ENCODE measurements at regions of chr19 and their contacts with region 1.

Region 1: GRCh38 chr19:10251792-10252694 is at the start of gene MRPL4:
- DNase-seq: peak; percentile 95
- H3K4me3 ChIP-seq: peak within 1 kb of the TSS; percentile 99
- H3K27ac ChIP-seq: peak within 1 kb of the TSS; percentile 47
- H3K27me3 ChIP-seq: no peaks in the 10 kb centered on the region
- CTCF ChIP-seq: no peak
- polyA plus RNA-seq, gene MRPL4: 28.5 and 41.4 TPM in 2 replicates

Region 2: GRCh38 chr19:10095948-10096621 is 156.0 kb before region 1 on chr19:
- CTCF ChIA-PET with region 1: interaction called, 10 read pairs
- POLR2A ChIA-PET with region 1: interaction called, 3 read pairs
- DNase-seq: peak; percentile 56
- H3K4me3 ChIP-seq: peak overlapping the region; percentile 58
- H3K27ac ChIP-seq: peak overlapping the region; percentile 25
- H3K27me3 ChIP-seq: no peaks in the 10 kb centered on the region
- CTCF ChIP-seq: no peak

Region 3: GRCh38 chr19:10120538-10121189 is 131.4 kb before region 1 on chr19:
- CTCF ChIA-PET with region 1: interaction called, 14 read pairs
- POLR2A ChIA-PET with region 1: interaction called, 3 read pairs
- DNase-seq: peak; percentile 50
- H3K4me3 ChIP-seq: no peak overlapping the region
- H3K27ac ChIP-seq: peak overlapping the region; percentile 63
- H3K27me3 ChIP-seq: no peaks in the 10 kb centered on the region
- CTCF ChIP-seq: no peak

Region 4: DNA sequence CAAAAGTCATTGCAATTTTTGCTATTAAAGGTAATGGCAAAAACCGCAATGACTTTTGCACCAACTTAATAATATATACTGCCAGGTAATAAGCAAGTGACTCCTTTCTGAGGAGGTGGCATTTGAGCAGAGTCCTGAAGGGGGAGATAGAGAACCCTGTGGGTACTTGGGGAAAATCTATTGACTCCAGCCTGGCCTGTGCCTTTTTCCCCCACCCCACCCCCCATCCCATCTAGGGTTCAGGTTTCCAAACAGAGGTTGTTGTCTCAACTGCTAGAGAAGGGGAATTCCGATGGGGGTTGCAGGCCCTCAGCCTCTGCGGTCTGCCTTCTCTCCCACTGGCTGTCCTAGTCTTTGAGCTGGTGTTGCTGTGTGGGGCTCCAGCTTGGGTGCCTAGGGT is 32.4 kb before region 1 on chr19:
- CTCF ChIA-PET with region 1: interaction called, 18 read pairs
- POLR2A ChIA-PET with region 1: no interaction called
- DNase-seq: peak; percentile 79
- H3K4me3 ChIP-seq: no peak overlapping the region
- H3K27ac ChIP-seq: peak overlapping the region; percentile 22
- H3K27me3 ChIP-seq: no peaks in the 10 kb centered on the region
- CTCF ChIP-seq: peak; percentile 76

Region 5: GRCh38 chr19:10228920-10229319 is 23.1 kb before region 1 on chr19:
- CTCF ChIA-PET with region 1: interaction called, 28 read pairs
- POLR2A ChIA-PET with region 1: interaction called, 8 read pairs
- DNase-seq: no peak
- H3K4me3 ChIP-seq: peak overlapping the region; percentile 41
- H3K27ac ChIP-seq: no peak overlapping the region
- H3K27me3 ChIP-seq: no peaks in the 10 kb centered on the region
- CTCF ChIP-seq: peak; percentile 51